Right lobe of liver (tissue), 6 donors: ENCODE measurements at regions of chr14 and their contacts with region 1.

Region 1: GRCh38 chr14:87745507-87746118 is 247.4 kb downstream of the GALC start:
- DNase-seq: peak in 1 of 3 donors; percentile 60
- ATAC-seq: peak; percentile 88 to 94 (median 92)
- H3K4me3 ChIP-seq: no peak overlapping the region
- H3K27ac ChIP-seq: no peak overlapping the region
- H3K4me1 ChIP-seq: no peaks in the 10 kb centered on the region
- H3K27me3 ChIP-seq: no peaks in the 10 kb centered on the region
- CTCF ChIP-seq: peak; percentile 60 to 81 (median 75)
- POLR2A ChIP-seq: no peak

Region 2: GRCh38 chr14:87896393-87897380 is 151.1 kb after region 1 on chr14:
- intact Hi-C with region 1: loop called (anchors 10 kb)
- DNase-seq: no peak
- ATAC-seq: peak; percentile 67 to 78 (median 76)
- H3K4me3 ChIP-seq: no peak overlapping the region
- H3K27ac ChIP-seq: no peak overlapping the region
- H3K4me1 ChIP-seq: no peaks in the 10 kb centered on the region
- H3K27me3 ChIP-seq: no peaks in the 10 kb centered on the region
- CTCF ChIP-seq: peak; percentile 55 to 79 (median 78)
- POLR2A ChIP-seq: no peak

Region 3: DNA sequence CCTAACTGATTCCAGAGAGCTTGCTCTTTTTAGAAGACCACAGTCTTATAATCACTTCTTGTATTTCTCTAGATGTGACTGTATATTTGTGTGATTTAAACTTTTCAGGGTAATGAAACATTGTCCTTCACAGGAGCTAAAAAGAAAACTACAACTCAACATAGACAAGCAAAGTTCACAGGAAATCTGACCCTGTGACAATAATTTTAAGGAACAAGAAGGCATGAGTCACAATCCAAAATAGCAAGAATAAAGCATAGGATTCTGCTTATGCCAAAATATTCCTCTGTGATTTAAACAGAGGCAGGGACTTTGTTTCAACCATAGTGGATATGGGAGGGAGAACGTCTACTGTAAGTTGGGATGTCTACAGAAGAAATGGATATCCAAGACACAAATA is 303.7 kb after region 1 on chr14:
- intact Hi-C with region 1: no loop called
- DNase-seq: no peak
- ATAC-seq: no peak
- H3K4me3 ChIP-seq: no peak overlapping the region
- H3K27ac ChIP-seq: peak overlapping the region in 1 of 3 donors; percentile 4
- H3K4me1 ChIP-seq: peaks cover 0 to 32% (median 16%) of the 10 kb centered on the region in 4 donors
- H3K27me3 ChIP-seq: no peaks in the 10 kb centered on the region
- CTCF ChIP-seq: no peak
- POLR2A ChIP-seq: no peak